ENCODE measurements at regions of chr12 and their contacts with region 1.

Region 1: GRCh38 chr12:93243689-93244513 is 133.8 kb upstream of the NUDT4 start:
- DNase-seq: peak; percentile 53
- H3K4me3 Mint-ChIP-seq: peak overlapping the region; percentile 49
- H3K27ac Mint-ChIP-seq: peak overlapping the region; percentile 82
- H3K4me1 Mint-ChIP-seq: peaks cover 34% of the 10 kb centered on the region
- H3K27me3 Mint-ChIP-seq: no peaks in the 10 kb centered on the region

Region 2: DNA sequence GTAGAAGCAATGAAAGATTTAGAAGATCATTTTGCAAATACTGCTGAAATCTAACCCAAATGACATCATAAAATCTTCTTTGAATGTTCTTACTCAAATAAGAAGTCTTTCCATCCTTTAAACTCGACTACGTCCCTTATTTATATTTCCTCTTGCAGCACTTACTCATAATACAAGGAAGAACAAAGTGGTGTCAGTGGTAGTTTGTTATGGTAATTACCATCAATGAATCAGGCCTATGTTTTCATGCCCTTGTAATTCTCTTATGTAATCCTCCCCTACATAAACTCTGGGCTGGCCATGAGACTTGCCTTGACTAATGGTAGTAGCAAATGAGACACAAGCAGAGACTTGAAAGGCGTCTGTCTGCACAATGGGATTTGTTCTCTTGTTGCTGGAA is 331.8 kb before region 1 on chr12:
- CTCF ChIA-PET with region 1: no interaction called
- intact Hi-C with region 1: loop called (anchors 1 kb)
- DNase-seq: peak; percentile 60
- H3K4me3 Mint-ChIP-seq: no peak overlapping the region
- H3K27ac Mint-ChIP-seq: peak overlapping the region; percentile 74
- H3K4me1 Mint-ChIP-seq: peaks cover 56% of the 10 kb centered on the region
- H3K27me3 Mint-ChIP-seq: no peaks in the 10 kb centered on the region

Region 3: DNA sequence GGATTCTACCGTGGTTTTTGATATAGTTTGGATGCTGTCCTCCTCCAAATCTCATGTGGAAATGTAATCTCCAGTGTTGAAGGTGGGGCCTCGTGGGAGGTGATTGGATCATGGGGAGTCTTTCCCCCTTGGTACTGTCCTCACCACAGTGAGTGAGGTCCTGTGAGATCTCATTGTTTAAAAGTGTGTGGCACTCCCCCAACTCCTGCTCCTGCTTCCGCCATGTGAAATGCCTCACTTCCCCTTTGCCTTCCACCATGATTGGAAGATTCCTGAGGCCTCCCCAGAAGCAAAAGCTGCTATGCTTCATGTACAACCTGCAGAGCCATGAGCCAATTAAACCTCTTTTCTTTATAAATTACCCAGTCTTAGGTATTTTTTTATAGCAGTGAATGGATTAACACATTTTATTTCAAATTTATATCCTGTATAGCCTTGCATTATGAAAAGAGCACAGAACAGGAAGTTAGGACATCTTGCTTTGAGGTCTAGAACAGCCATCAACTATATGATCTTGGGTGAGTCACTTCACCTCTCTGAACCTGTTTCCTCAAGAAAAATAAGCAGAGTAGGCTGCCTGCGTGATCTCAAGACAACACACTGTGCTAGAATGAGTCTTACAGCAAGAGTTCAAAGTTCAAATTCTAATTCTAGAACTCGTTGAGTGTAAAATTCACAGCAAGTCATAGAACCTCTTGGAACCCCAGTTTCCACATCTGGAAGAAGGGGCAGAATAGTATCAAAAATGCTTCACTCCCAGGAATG is 153.9 kb before region 1 on chr12:
- CTCF ChIA-PET with region 1: no interaction called
- intact Hi-C with region 1: loop called (anchors 1 kb)
- DNase-seq: peak; percentile 64
- H3K4me3 Mint-ChIP-seq: no peak overlapping the region
- H3K27ac Mint-ChIP-seq: peak overlapping the region; percentile 68
- H3K4me1 Mint-ChIP-seq: peaks cover 13% of the 10 kb centered on the region
- H3K27me3 Mint-ChIP-seq: no peaks in the 10 kb centered on the region

Region 4: DNA sequence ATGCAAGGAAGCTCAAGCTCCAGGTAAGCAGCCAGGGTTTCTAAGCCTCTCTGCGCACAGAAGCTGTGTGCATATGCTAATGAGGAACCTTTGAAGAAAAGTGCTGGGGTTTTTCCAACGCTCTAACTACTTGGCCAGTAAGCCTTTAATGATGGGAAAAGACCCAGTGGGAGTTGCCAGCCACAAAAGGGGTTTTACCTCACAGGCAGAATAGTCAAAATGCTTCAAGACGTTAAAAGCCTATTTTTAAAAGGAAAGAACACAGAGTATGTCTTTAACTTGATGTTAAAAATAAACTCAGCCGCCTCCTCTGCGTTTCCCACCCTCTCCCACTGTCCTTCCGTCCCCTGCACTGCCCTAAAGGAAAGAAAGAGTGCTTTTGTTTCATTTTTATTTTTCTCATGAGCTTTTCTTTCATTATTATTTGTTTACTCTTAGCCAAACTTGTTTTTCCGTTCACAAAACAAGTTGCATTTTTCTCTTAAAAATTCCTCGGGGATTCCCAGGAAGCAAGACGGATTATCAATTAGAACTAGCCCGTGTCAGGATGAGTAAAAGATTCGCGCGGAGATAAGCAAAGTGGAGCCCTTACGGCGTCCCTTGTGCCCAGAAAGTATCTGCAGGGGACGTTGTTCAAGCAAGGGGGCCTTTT is 75.9 kb before region 1 on chr12:
- CTCF ChIA-PET with region 1: no interaction called
- intact Hi-C with region 1: loop called (anchors 1 kb)
- DNase-seq: peak; percentile 85
- H3K4me3 Mint-ChIP-seq: peak overlapping the region; percentile 49
- H3K27ac Mint-ChIP-seq: peak overlapping the region; percentile 67
- H3K4me1 Mint-ChIP-seq: peaks cover 17% of the 10 kb centered on the region
- H3K27me3 Mint-ChIP-seq: peaks cover 7% of the 10 kb centered on the region

Region 5: DNA sequence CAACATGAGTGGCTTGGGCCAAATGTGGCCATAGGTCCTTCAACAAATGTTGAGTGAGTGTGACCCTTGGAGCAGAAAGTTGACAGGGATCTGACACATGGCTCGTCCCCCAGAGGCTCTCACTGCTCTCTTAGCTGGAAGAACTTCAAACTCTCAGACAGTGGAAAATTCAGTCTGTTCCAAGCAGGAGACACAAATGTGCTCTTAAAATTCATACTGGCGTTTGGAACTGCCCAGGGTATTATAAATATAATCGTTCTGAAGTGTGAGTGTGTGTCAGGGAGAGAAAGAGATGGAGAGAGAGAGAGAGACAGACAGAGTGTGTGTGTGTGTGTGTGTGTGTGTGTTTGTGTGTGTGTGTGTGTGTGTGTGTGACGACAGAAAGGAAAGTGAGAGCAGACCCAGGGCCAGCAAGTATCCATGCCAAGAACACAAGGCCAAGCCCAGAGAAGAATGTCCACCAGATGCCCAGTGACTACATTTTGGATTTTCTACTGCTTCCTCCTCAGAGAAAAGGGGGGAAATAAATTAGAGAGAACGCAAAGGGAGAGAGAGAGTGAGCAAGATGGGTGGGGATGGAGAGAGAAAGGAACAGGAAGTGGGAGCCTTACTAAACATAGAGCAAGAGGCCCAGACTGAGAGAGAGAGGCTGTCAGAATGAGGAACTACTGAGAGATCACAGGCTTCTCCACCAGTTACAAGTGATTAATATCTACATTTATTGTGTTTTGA is 59.8 kb before region 1 on chr12:
- CTCF ChIA-PET with region 1: interaction called, 3 read pairs
- intact Hi-C with region 1: loop called (anchors 5 kb)
- DNase-seq: peak; percentile 25
- H3K4me3 Mint-ChIP-seq: no peak overlapping the region
- H3K27ac Mint-ChIP-seq: peak overlapping the region; percentile 63
- H3K4me1 Mint-ChIP-seq: peaks cover 27% of the 10 kb centered on the region
- H3K27me3 Mint-ChIP-seq: no peaks in the 10 kb centered on the region

Region 6: GRCh38 chr12:93361151-93361919 is 117.4 kb after region 1 on chr12:
- CTCF ChIA-PET with region 1: no interaction called
- intact Hi-C with region 1: no loop called
- DNase-seq: no peak
- H3K4me3 Mint-ChIP-seq: no peak overlapping the region
- H3K27ac Mint-ChIP-seq: no peak overlapping the region
- H3K4me1 Mint-ChIP-seq: peaks cover 11% of the 10 kb centered on the region
- H3K27me3 Mint-ChIP-seq: no peaks in the 10 kb centered on the region

Region 7: DNA sequence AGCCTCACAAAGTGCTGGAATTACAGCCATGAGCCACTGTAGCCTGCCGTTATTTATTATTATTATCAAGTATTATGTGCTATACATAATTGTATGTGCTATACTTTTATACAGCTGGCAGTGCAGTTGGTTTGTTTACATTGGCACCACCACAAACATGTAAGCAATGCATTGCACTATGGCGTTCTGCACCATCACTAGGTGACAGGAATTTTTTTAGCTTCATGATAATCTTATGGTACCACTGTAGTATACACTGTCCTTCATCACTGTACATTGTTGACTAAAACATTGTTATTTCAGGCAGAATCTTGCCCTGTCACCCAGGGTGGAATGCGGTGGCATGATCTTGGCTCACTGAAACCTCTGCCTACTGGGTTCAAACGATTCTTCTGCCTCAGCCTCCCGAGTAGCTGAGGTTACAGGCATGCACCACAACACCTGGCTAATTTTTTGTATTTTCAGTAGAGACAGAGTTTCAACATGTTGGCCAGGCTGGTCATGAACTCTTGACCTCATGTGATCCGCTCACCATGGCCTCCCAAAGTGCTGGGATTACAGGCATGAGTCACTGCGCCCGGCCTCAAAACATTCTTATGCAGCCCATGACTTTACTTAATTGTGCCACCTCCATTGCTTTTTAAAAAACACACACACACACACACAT is 240.5 kb after region 1 on chr12:
- CTCF ChIA-PET with region 1: no interaction called
- intact Hi-C with region 1: no loop called
- DNase-seq: no peak
- H3K4me3 Mint-ChIP-seq: no peak overlapping the region
- H3K27ac Mint-ChIP-seq: no peak overlapping the region
- H3K4me1 Mint-ChIP-seq: peaks cover 2% of the 10 kb centered on the region
- H3K27me3 Mint-ChIP-seq: no peaks in the 10 kb centered on the region

Region 8: GRCh38 chr12:93698307-93699092 is 454.6 kb after region 1 on chr12:
- CTCF ChIA-PET with region 1: no interaction called
- intact Hi-C with region 1: no loop called
- DNase-seq: no peak
- H3K4me3 Mint-ChIP-seq: no peak overlapping the region
- H3K27ac Mint-ChIP-seq: no peak overlapping the region
- H3K4me1 Mint-ChIP-seq: peaks cover 32% of the 10 kb centered on the region
- H3K27me3 Mint-ChIP-seq: no peaks in the 10 kb centered on the region

Measured in activated naive CD4-positive, alpha-beta T cell treated with anti-CD3 and anti-CD28 coated beads for 36 hours (primary cell).